ENCODE measurements at regions of chr20 and their contacts with region 1.

Region 1: DNA sequence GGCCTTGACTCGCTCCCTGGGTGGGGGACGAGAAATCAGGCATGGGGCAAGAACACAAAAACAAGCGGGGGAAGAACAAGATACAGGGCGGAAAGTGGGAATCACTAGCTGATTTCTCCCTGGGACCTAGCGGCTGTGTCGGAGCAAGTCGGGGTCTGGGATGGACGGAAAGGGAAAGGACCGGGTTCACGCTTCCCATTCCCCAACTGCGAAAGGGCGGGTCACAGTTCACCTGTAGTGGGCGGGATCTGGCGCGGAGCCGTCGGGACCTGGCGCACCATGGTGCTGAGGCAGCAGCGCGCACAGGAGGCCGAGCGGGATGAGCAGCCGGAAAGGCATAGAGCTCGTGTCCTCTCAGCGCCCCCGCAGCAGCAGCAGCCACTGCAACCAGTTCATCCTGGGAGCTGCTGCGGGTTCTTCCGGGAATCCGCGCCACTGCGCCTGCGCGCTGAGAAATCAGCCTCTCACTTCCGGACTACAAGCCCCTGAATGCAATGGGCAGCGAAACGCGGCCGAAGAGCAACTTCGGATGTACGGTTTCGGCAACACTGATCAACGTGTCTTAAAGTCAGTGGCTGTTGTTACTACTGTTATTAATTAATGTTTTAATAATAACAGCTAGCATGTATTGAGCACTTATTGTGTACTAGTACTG is at the start of gene EDEM2:
- DNase-seq: peak; percentile 95
- H3K4me3 ChIP-seq: peak within 1 kb of the TSS; percentile 64 to 90 (median 87)
- H3K27ac ChIP-seq: peak within 1 kb of the TSS; percentile 81
- H3K4me1 ChIP-seq: peaks cover 11% of the 10 kb centered on the region
- H3K27me3 ChIP-seq: no peaks in the 10 kb centered on the region
- CTCF ChIP-seq: no peak
- total RNA-seq, gene EDEM2: 22.3 to 33.2 TPM

Region 2: DNA sequence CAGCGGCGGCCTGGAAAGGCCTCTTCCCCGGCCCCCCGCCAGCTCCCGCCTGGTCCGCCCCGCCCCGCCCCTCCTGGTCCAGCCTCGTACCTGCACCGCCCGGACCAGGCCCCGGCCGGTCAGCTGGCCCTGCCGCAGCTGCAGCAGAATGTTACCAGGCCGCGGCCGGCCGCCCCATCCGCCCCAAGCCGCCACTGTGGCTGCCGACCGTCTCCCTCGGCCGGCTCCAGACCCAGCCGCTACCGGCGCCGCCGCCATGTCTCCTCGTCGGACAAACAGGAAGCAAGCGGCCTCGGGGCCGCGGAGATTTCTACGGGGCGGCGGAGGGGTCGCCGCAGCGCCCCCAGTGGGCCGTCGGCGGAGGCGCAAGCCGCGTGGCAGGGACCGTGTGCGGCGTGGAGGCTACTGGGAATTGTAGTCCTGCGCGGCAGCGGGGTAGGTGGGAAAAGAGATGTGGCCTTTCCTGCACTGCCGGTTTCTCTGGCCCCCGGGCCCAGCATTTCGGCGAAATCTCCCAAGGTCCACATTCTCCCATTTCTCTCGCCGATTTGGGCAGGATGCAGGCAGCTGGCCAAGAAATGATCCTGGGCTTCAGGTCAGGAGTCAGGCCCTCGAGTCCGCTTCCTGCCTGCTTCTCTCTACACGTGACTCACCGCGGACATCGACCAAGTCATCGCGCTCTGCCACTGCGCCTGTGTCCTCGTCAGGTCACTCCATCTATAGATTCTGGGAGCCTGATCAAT is 54.4 kb before region 1 on chr20 and contains the start of gene TRPC4AP:
- CTCF ChIA-PET with region 1: interaction called, 28 read pairs
- dilution Hi-C with region 1: no loop called
- in situ Hi-C with region 1: no loop called
- intact Hi-C with region 1: loop called (anchors 1 kb)
- DNase-seq: peak; percentile 87
- H3K4me3 ChIP-seq: peak within 1 kb of the TSS; percentile 75 to 99 (median 97)
- H3K27ac ChIP-seq: peak within 1 kb of the TSS; percentile 72
- H3K4me1 ChIP-seq: peaks cover 30% of the 10 kb centered on the region
- H3K27me3 ChIP-seq: no peaks in the 10 kb centered on the region
- CTCF ChIP-seq: peak; percentile 81 to 98
- total RNA-seq, gene TRPC4AP: 63.8 to 89.0 TPM

Region 3: DNA sequence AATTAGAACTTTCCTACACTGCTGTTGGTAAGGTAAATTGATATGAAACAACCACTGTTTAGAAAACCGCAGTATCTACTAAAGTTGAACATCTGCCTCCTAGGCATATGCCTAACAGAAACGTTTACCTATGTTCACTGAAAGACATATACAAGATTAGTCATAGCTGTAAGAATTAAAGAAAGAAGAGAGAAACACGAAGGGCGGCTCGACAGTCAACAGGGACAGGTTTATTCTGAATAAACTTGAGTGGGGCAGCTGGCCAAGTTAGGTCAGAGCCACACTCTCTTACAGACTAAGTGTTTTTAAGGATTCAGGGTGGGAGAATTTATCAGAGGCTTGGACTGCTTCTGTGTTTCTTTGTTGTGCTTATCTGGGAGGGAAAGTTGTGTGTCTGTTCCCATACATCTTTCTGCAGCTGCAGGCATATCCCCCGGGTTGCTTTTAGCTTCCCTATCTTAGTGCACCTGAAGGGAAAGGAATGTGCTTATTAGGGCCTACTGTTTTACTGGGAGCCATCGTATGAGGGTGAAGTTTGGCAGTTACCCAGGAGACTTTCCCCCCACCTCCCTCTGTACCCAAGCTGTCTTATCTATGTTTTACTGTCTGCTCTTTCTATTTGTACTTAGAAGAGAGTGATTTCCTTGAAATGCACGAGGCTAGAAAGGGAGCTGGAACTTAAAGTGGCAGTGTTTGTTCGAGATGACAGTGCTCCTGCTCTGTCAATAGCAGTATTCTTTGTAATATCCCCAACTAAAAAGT is 45.2 kb after region 1 on chr20:
- CTCF ChIA-PET with region 1: interaction called, 4 read pairs
- dilution Hi-C with region 1: loop called (anchors 5 kb)
- in situ Hi-C with region 1: no loop called
- intact Hi-C with region 1: no loop called
- DNase-seq: peak; percentile 4
- H3K4me3 ChIP-seq: no peak overlapping the region
- H3K27ac ChIP-seq: no peak overlapping the region
- H3K4me1 ChIP-seq: no peaks in the 10 kb centered on the region
- H3K27me3 ChIP-seq: no peaks in the 10 kb centered on the region
- CTCF ChIP-seq: no peak

Region 4: DNA sequence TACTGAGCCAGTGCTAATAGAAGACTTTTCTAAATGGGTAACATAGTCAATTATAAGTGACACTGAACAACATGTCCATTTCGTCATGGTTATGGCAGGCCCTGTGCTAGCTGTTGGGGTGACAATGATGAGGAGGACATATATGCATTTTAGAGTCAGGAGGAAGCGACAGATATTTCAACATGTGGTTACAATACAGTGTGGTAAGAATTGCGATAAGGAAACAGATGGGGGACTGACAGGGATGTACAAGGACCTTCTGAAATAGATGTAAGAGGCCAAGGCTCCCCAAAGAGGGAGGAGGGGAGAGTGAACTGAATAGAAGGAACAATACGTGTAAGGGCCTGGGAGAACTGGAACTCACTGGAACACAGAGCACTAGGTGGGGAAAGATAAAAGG is 91.1 kb after region 1 on chr20:
- CTCF ChIA-PET with region 1: no interaction called
- dilution Hi-C with region 1: no loop called
- in situ Hi-C with region 1: no loop called
- intact Hi-C with region 1: no loop called
- DNase-seq: no peak
- H3K4me3 ChIP-seq: no peak overlapping the region
- H3K27ac ChIP-seq: no peak overlapping the region
- H3K4me1 ChIP-seq: no peaks in the 10 kb centered on the region
- H3K27me3 ChIP-seq: no peaks in the 10 kb centered on the region
- CTCF ChIP-seq: no peak

Region 5: DNA sequence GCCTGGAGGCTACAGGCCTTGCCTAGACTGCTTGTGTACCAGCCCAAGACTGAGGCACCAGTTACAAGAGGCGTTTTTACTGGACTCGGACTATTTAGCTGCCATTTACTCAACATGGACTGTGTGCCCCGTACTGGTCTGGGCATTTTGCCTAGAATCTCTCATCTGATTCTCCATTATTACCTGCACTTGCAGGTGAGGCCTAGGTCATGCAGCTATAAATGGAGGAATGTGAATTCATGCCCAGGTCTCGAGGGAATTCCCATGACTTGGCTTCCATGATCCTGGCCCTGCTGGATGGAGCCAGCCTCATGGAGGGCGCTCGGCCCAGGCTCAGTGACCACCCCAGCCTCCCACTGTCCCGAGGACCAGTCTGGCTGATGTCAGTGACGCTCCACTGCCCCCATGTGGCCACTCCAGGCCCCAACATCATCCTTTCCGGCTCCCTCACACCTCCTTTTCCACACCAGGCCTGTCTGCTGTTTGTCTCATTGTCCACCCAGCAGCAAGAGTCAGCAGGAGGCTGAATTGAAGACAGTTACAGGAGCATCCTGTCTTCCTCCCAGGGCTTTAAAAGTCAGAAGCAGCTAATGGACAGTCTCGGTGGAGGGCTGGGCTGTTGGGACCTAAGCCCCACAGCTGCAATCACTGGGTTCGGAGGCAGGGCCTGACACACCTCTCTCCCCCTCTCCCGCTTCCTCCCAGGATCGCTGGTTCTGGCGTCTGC is 122.2 kb after region 1 on chr20:
- CTCF ChIA-PET with region 1: interaction called, 4 read pairs
- dilution Hi-C with region 1: no loop called
- in situ Hi-C with region 1: loop called in 1 of 2 experiments (anchors 5 kb)
- intact Hi-C with region 1: loop called (anchors 1 kb)
- DNase-seq: peak; percentile 50
- H3K4me3 ChIP-seq: no peak overlapping the region
- H3K27ac ChIP-seq: no peak overlapping the region
- H3K4me1 ChIP-seq: peaks cover 3% of the 10 kb centered on the region
- H3K27me3 ChIP-seq: no peaks in the 10 kb centered on the region
- CTCF ChIP-seq: peak; percentile 77 to 89